ENCODE measurements at regions of chr9 and their contacts with region 1.

Region 1: DNA sequence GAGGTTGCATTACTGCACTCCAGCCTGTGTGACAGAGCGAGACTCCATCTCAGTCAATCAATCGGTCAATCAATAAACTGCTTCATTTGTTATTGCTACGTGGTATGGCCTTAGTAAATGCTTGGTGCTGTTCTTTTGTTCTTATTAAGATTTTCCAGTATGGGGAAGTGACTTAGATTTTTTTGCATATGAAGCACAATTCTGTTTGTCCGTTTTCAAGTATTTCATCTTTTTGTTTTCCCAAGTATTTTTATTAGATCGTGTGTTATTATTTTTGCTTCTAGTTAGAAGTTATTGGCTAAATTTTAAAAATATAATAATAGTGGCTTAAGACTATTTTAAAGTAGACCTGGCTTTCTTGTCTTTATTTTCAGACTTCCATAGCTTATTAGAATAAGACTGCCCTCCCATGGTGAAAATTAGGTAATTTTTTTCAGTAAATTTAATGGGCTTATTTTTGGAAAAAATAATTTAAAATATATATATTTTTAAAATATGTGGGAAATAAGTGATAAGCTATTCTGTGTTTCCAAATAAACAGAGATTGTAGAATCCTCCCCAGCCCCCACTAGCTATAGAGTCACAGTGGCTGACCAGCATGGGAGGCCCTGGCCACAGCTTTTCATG is 14.7 kb upstream of the OMD start:
- DNase-seq: no peak
- ATAC-seq: no peak
- H3K4me3 ChIP-seq: no peak overlapping the region
- H3K27ac ChIP-seq: peak overlapping the region in 1 of 4 donors; percentile 45
- H3K4me1 ChIP-seq: peaks cover 5 to 10% of the 10 kb centered on the region in 2 donors
- H3K27me3 ChIP-seq: no peaks in the 10 kb centered on the region
- CTCF ChIP-seq: no peak
- POLR2A ChIP-seq: no peak

Region 2: GRCh38 chr9:92342825-92343488 is 96.1 kb before region 1 on chr9:
- in situ Hi-C with region 1: loop called in 1 of 4 experiments (anchors 5 kb)
- intact Hi-C with region 1: loop called (anchors 10 kb)
- DNase-seq: no peak
- ATAC-seq: no peak
- H3K4me3 ChIP-seq: no peak overlapping the region
- H3K27ac ChIP-seq: no peak overlapping the region
- H3K4me1 ChIP-seq: no peaks in the 10 kb centered on the region
- H3K27me3 ChIP-seq: no peaks in the 10 kb centered on the region
- CTCF ChIP-seq: peak in 2 of 5 experiments; percentile 16 to 19
- POLR2A ChIP-seq: no peak

Measured in gastrocnemius medialis (tissue), 4 donors.